ENCODE measurements at regions of chr1 and their contacts with region 1.

Region 1: GRCh38 chr1:225597926-225598575 is 54.9 kb downstream of the ENAH start:
- DNase-seq: no peak
- ATAC-seq: no peak
- H3K4me3 ChIP-seq: no peak overlapping the region
- H3K27ac ChIP-seq: no peak overlapping the region
- H3K4me1 ChIP-seq: peaks cover 13% of the 10 kb centered on the region
- H3K27me3 ChIP-seq: no peaks in the 10 kb centered on the region
- CTCF ChIP-seq: no peak
- EP300 ChIP-seq: no peak
- POLR2A ChIP-seq: no peak
- RAD21 ChIP-seq: no peak

Region 2: GRCh38 chr1:225612287-225612686 is 14.2 kb after region 1 on chr1:
- CTCF ChIA-PET with region 1: no interaction called
- POLR2A ChIA-PET with region 1: no interaction called
- in situ Hi-C with region 1: no loop called
- intact Hi-C with region 1: no loop called
- DNase-seq: no peak
- ATAC-seq: no peak
- H3K4me3 ChIP-seq: no peak overlapping the region
- H3K27ac ChIP-seq: no peak overlapping the region
- H3K4me1 ChIP-seq: peaks cover 31% of the 10 kb centered on the region
- H3K27me3 ChIP-seq: no peaks in the 10 kb centered on the region
- CTCF ChIP-seq: no peak
- EP300 ChIP-seq: no peak
- POLR2A ChIP-seq: no peak
- RAD21 ChIP-seq: no peak

Region 3: GRCh38 chr1:225642177-225642576 is 44.1 kb after region 1 on chr1:
- CTCF ChIA-PET with region 1: no interaction called
- POLR2A ChIA-PET with region 1: no interaction called
- in situ Hi-C with region 1: no loop called
- intact Hi-C with region 1: loop called (anchors 10 kb)
- DNase-seq: peak; percentile 28
- ATAC-seq: no peak
- H3K4me3 ChIP-seq: no peak overlapping the region
- H3K27ac ChIP-seq: no peak overlapping the region
- H3K4me1 ChIP-seq: peaks cover 34% of the 10 kb centered on the region
- H3K27me3 ChIP-seq: no peaks in the 10 kb centered on the region
- CTCF ChIP-seq: no peak
- EP300 ChIP-seq: no peak
- POLR2A ChIP-seq: no peak
- RAD21 ChIP-seq: no peak